ENCODE measurements at regions of chr5 and their contacts with region 1.

Region 1: DNA sequence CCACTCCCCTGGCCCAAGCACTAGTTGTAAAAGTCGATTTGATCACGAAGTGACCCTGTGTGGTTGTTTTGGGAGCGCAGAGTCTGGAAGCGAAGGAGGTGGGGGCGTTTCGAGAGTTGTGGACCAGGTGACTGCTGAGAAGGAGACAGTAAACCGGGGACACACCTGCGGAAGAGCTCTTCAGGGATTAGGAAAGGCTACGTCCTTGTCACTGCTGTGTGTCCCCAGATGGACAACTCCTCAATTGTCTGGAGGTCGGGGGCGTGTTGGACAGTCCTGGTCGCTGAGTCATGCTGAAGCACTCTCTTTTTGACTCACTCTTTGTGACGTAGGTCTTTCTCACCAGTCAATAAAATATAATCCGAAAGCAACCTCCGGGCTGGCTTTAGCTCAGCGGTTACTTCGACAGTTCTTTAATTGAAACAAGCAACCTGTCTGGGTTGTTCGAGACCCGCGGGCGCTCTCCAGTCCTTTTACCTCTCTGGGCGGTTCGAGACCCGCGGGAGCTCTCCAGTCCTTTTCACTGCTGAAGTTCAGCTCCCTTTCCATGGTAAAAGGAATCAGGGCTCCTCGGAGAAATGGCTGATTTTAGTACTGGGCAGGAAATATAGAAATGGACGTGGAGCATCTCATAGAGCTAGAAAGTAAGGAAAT is 10.8 kb downstream of the ZMAT2 start:
- DNase-seq: peak; percentile 60
- ATAC-seq: peak; percentile 85
- H3K4me3 Mint-ChIP-seq: peak overlapping the region; percentile 93
- H3K27ac Mint-ChIP-seq: peak overlapping the region; percentile 90
- H3K4me1 Mint-ChIP-seq: peaks cover 18% of the 10 kb centered on the region
- H3K27me3 Mint-ChIP-seq: peaks cover 3% of the 10 kb centered on the region
- CTCF ChIP-seq: no peak

Region 2: DNA sequence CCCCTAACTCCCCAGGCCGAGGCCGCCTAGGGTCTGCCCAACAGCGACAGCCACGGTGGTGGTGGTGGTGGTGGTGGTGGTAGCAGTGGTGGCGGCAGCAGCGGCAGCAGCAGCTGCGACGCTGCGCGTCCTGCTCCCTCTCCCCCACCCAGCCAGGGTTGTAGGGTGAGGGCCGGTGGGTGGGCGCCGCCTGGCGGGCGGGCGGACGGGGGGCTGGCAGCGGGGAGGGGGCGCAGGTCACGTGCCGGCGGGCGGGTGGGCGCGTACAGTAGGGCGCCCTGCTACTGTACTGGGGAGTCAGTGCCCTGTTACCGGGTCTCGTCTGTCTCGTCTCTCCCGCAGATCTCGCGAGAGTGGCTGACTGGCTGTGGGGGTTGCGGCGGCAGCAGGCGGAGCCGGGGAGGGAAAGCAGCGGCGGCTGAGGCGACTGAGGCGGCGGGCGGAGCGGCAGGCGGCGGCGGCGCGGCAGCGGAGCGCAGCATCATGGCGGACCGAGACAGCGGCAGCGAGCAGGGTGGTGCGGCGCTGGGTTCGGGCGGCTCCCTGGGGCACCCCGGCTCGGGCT is 597.2 kb before region 1 on chr5 and contains the start of gene PURA:
- CTCF ChIA-PET with region 1: no interaction called
- POLR2A ChIA-PET with region 1: interaction called, 3 read pairs
- intact Hi-C with region 1: loop called (anchors 5 kb)
- DNase-seq: peak; percentile 92
- ATAC-seq: peak; percentile 90
- H3K4me3 Mint-ChIP-seq: peak within 1 kb of the TSS; percentile 94
- H3K27ac Mint-ChIP-seq: peak within 1 kb of the TSS; percentile 92
- H3K4me1 Mint-ChIP-seq: peaks cover 72% of the 10 kb centered on the region
- H3K27me3 Mint-ChIP-seq: peaks cover 6% of the 10 kb centered on the region
- CTCF ChIP-seq: no peak
- total RNA-seq, gene PURA: 13.2 and 14.9 TPM in 2 replicates

Region 3: GRCh38 chr5:140302786-140303639 is 408.0 kb before region 1 on chr5 and contains the start of gene PFDN1:
- CTCF ChIA-PET with region 1: no interaction called
- POLR2A ChIA-PET with region 1: no interaction called
- intact Hi-C with region 1: loop called (anchors 5 kb)
- DNase-seq: peak; percentile 76
- ATAC-seq: peak; percentile 99
- H3K4me3 Mint-ChIP-seq: peak within 1 kb of the TSS; percentile 99
- H3K27ac Mint-ChIP-seq: peak within 1 kb of the TSS; percentile 97
- H3K4me1 Mint-ChIP-seq: peaks cover 21% of the 10 kb centered on the region
- H3K27me3 Mint-ChIP-seq: peaks cover 3% of the 10 kb centered on the region
- CTCF ChIP-seq: no peak
- total RNA-seq, gene PFDN1: 38.2 and 38.4 TPM in 2 replicates

Region 4: GRCh38 chr5:140564196-140565023 is 146.6 kb before region 1 on chr5 and contains the starts of genes APBB3 and SLC35A4:
- CTCF ChIA-PET with region 1: no interaction called
- POLR2A ChIA-PET with region 1: no interaction called
- intact Hi-C with region 1: loop called (anchors 1 kb)
- DNase-seq: peak; percentile 89
- ATAC-seq: peak; percentile 90
- H3K4me3 Mint-ChIP-seq: peak within 1 kb of the TSS; percentile 98
- H3K27ac Mint-ChIP-seq: peak within 1 kb of the TSS; percentile 90
- H3K4me1 Mint-ChIP-seq: peaks cover 57% of the 10 kb centered on the region
- H3K27me3 Mint-ChIP-seq: no peaks in the 10 kb centered on the region
- CTCF ChIP-seq: no peak
- total RNA-seq, gene APBB3: 36.0 and 37.5 TPM in 2 replicates
- total RNA-seq, gene SLC35A4: 76.0 and 77.9 TPM in 2 replicates

Region 5: GRCh38 chr5:140647042-140647341 is 64.0 kb before region 1 on chr5:
- CTCF ChIA-PET with region 1: interaction called, 4 read pairs
- POLR2A ChIA-PET with region 1: interaction called, 14 read pairs
- intact Hi-C with region 1: loop called (anchors 1 kb)
- DNase-seq: no peak
- ATAC-seq: no peak
- H3K4me3 Mint-ChIP-seq: peak overlapping the region; percentile 99
- H3K27ac Mint-ChIP-seq: peak overlapping the region; percentile 98
- H3K4me1 Mint-ChIP-seq: peaks cover 38% of the 10 kb centered on the region
- H3K27me3 Mint-ChIP-seq: no peaks in the 10 kb centered on the region
- CTCF ChIP-seq: no peak

Region 6: GRCh38 chr5:140690941-140691924 is 19.8 kb before region 1 on chr5 and contains the starts of genes HARS1 and HARS2:
- CTCF ChIA-PET with region 1: no interaction called
- POLR2A ChIA-PET with region 1: interaction called, 23 read pairs
- intact Hi-C with region 1: loop called (anchors 1 kb)
- DNase-seq: peak; percentile 70
- ATAC-seq: peak; percentile 95
- H3K4me3 Mint-ChIP-seq: peak within 1 kb of the TSS; percentile 100
- H3K27ac Mint-ChIP-seq: peak within 1 kb of the TSS; percentile 97
- H3K4me1 Mint-ChIP-seq: peaks cover 31% of the 10 kb centered on the region
- H3K27me3 Mint-ChIP-seq: no peaks in the 10 kb centered on the region
- CTCF ChIP-seq: no peak
- total RNA-seq, gene HARS1: 78.2 and 84.0 TPM in 2 replicates
- total RNA-seq, gene HARS2: 45.7 and 48.5 TPM in 2 replicates